ENCODE measurements at regions of chr19 and their contacts with region 1.

Region 1: GRCh38 chr19:56314562-56315077 is at the start of gene ZSCAN5A:
- DNase-seq: peak; percentile 92
- ATAC-seq: peak; percentile 79
- H3K4me3 ChIP-seq: peak within 1 kb of the TSS; percentile 89 to 92
- H3K27ac ChIP-seq: peak within 1 kb of the TSS; percentile 85
- H3K4me1 ChIP-seq: peaks cover 3 to 17% of the 10 kb centered on the region in 2 experiments; a peak in 3 of 4 replicates
- H3K27me3 ChIP-seq: no peaks in the 10 kb centered on the region
- CTCF ChIP-seq: no peak
- POLR2A ChIP-seq: no peak
- RAD21 ChIP-seq: no peak
- total RNA-seq, gene ZSCAN5A: 9.2 TPM

Region 2: DNA sequence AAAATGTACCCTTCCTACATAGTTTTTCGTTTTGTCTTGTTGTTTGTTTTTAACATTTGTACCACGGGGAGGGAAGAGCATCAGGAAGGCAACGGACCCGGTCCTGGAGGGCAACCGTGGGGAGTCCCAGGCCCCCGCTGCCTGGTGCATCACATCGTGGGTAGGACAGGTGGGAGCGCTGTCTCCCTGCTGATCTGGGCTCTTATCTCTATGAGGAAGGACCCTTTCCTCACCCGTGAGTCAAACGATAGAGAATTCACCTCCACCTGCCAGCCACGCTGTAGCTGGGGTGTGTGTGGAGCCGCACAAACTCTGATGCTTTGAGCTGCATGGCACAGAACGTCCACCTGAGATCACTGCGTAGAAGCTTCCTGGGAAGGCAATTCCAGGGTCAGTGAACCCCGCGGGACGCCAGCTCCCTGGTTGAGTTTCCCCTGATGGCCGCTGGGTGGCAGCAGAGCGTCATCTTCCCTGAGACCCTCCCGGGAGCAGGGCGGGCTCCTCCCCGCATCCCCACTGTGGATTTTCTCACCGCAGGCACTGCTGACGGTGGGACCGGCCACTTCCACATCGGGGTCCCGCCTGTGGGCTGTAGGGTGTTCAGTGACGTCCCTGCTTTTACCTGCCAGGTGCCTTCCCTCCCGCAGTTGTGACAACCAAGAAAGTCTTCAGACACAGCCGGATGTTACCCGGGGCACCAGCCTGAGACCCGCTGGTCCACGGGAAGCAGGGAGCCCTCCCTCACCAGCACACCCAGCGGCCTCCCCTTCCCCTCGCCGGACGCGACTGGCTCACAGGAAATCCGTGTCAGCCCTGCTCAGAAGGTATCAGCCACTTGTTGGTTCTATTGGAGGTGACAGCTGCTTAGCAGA is 248.2 kb before region 1 on chr19:
- CTCF ChIA-PET with region 1: interaction called, 18 read pairs
- POLR2A ChIA-PET with region 1: no interaction called
- RAD21 ChIA-PET with region 1: no interaction called
- intact Hi-C with region 1: no loop called
- DNase-seq: peak; percentile 44
- ATAC-seq: peak; percentile 96
- H3K4me3 ChIP-seq: peak overlapping the region; percentile 30 to 46
- H3K27ac ChIP-seq: no peak overlapping the region
- H3K4me1 ChIP-seq: peaks cover 6 to 10% of the 10 kb centered on the region in 2 experiments
- H3K27me3 ChIP-seq: peaks cover 11% of the 10 kb centered on the region; the same call in 1 of the 2 replicates
- CTCF ChIP-seq: peak; percentile 70 to 91 (median 88)
- POLR2A ChIP-seq: no peak
- RAD21 ChIP-seq: peak; percentile 74

Region 3: DNA sequence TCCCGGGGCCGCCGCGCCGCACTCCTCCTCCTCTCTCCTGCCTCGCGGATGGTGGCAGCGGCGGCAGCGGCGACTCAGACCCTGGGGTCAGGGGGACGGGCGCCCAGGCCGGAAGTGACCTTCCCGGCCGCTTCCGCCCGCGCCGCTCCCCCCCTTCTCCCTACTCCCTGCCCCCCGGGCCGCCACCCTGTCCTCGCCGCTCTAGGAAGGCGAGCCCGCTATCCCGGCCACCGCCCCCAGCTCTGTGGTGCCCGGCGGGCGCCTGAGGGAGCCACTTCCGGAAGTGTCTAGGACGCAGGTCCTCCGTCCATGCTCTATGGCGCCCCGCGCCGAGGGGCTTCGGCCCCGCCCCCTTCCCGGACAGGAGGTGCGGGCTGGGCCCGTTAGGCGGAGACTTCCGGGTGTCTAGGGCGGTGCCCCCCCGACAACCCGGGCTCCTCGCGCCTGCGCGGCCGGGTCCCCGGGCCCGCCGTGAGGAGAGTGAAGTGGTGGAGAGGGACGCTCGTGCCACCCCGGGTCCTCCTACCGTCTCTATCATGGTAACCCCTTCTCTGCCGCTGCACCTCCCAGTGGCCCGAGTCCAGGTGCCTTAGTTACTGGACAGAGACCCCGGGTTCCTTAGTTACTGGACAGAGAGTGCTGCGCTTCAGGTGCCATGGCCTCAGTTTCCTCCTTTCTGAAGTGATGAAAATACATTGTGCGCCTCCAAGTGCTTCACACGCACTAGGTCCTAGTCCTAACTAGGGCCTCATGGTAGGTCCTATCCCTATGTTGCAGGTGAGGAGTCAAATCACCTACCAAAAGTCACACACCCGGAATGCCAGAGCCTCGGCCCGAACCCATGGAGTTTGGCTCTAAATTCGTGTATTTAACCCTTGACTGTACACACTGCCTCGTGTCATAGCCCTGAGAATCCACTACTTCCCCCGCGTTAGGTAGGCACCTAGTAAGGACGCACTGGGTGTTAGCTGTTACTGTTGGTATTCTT is 193.1 kb before region 1 on chr19 and contains the start of gene ZNF787:
- CTCF ChIA-PET with region 1: interaction called, 3 read pairs
- POLR2A ChIA-PET with region 1: no interaction called
- RAD21 ChIA-PET with region 1: no interaction called
- intact Hi-C with region 1: loop called (anchors 2 kb)
- DNase-seq: peak; percentile 96
- ATAC-seq: peak; percentile 82
- H3K4me3 ChIP-seq: peak within 1 kb of the TSS; percentile 80 to 91
- H3K27ac ChIP-seq: peak within 1 kb of the TSS; percentile 96
- H3K4me1 ChIP-seq: peaks cover 9 to 22% of the 10 kb centered on the region in 2 experiments
- H3K27me3 ChIP-seq: no peaks in the 10 kb centered on the region
- CTCF ChIP-seq: no peak
- POLR2A ChIP-seq: no peak
- RAD21 ChIP-seq: no peak
- total RNA-seq, gene ZNF787: 40.3 TPM

Region 4: GRCh38 chr19:56140583-56141416 is 173.8 kb before region 1 on chr19 and contains the start of gene ZNF444:
- CTCF ChIA-PET with region 1: no interaction called
- POLR2A ChIA-PET with region 1: no interaction called
- RAD21 ChIA-PET with region 1: no interaction called
- intact Hi-C with region 1: loop called (anchors 1 kb)
- DNase-seq: peak; percentile 96
- ATAC-seq: peak; percentile 95
- H3K4me3 ChIP-seq: peak within 1 kb of the TSS; percentile 71 to 72
- H3K27ac ChIP-seq: peak within 1 kb of the TSS; percentile 52
- H3K4me1 ChIP-seq: peaks cover 6 to 12% of the 10 kb centered on the region in 2 experiments
- H3K27me3 ChIP-seq: no peaks in the 10 kb centered on the region
- CTCF ChIP-seq: no peak
- POLR2A ChIP-seq: no peak
- RAD21 ChIP-seq: no peak
- total RNA-seq, gene ZNF444: 31.7 TPM

Region 5: DNA sequence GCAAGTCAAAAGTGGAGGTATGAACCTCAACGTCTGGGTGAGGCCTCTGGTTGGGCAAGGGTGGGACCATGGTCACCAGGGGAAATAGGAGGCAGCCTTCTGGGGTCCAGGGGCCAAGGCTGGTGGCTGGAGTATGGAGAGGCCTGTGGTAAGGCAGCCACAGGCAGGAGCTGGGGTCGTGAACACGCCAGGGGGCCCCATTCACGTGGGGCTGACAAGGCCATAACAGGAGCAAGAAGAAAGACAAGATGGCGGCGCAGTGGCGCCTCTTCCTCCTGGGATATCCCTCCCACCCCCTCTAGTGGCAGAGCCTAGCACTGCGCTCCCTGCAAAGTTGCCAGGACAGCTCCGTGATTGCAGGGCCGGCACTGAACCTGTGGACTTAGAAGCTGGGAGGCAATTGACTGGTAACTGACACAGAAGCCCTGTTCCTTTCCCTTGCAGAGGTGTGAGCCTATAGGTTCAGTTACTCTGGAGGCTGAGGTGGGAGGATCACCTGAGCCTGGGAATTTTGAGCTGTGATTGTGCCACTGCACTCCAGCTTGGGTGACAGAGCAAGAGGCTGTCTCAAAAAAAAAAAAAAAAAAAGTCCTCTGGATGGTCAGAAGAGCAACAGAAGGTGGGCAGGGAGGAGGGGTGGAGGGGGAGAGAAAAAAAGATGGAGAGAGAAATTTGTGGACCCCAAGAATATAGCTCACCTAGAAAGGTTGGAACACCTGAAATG is 61.8 kb before region 1 on chr19:
- CTCF ChIA-PET with region 1: interaction called, 55 read pairs
- POLR2A ChIA-PET with region 1: interaction called, 4 read pairs
- RAD21 ChIA-PET with region 1: interaction called in 1 of 2 experiments, 8 read pairs
- intact Hi-C with region 1: loop called (anchors 5 kb)
- DNase-seq: peak; percentile 70
- ATAC-seq: peak; percentile 96
- H3K4me3 ChIP-seq: no peak overlapping the region
- H3K27ac ChIP-seq: no peak overlapping the region
- H3K4me1 ChIP-seq: peaks cover 0 to 3% of the 10 kb centered on the region in 2 experiments; a peak in 1 of 4 replicates
- H3K27me3 ChIP-seq: no peaks in the 10 kb centered on the region
- CTCF ChIP-seq: peak; percentile 67 to 99 (median 91); a peak in 5 of 6 replicates
- POLR2A ChIP-seq: no peak
- RAD21 ChIP-seq: peak; percentile 60

Region 6: DNA sequence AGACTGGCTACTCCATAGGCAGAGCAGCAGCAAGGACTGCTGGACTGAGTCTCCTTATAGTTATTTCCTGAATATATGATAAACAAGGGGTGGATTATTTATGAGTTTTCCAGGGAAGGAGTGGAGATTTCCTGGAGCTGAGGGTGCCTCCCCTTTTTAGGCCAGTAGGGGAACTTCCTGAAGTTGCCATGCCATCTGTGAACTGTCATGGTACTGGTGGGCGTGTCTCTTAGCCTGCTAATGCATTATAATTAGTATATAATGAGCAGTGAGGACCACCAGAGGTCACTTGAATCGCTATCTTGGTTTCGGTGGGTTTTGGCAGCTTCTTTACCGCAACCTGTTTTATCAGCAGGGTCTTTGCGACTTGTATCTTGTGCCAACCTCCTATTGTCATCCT is 13.4 kb before region 1 on chr19:
- CTCF ChIA-PET with region 1: interaction called, 36 read pairs
- POLR2A ChIA-PET with region 1: no interaction called
- RAD21 ChIA-PET with region 1: no interaction called
- intact Hi-C with region 1: no loop called
- DNase-seq: no peak
- ATAC-seq: peak; percentile 60; the same call in 1 of the 2 replicates
- H3K4me3 ChIP-seq: no peak overlapping the region
- H3K27ac ChIP-seq: no peak overlapping the region
- H3K4me1 ChIP-seq: no peaks in the 10 kb centered on the region
- H3K27me3 ChIP-seq: no peaks in the 10 kb centered on the region
- CTCF ChIP-seq: peak in 2 of 3 experiments; percentile 27 to 31; a peak in 3 of 6 replicates
- POLR2A ChIP-seq: no peak
- RAD21 ChIP-seq: no peak

Region 7: GRCh38 chr19:56333505-56333904 is 18.9 kb after region 1 on chr19:
- CTCF ChIA-PET with region 1: interaction called, 36 read pairs
- POLR2A ChIA-PET with region 1: no interaction called
- RAD21 ChIA-PET with region 1: no interaction called
- intact Hi-C with region 1: no loop called
- DNase-seq: peak; percentile 48
- ATAC-seq: peak; percentile 84
- H3K4me3 ChIP-seq: no peak overlapping the region
- H3K27ac ChIP-seq: no peak overlapping the region
- H3K4me1 ChIP-seq: no peaks in the 10 kb centered on the region
- H3K27me3 ChIP-seq: peaks cover 3% of the 10 kb centered on the region; the same call in 1 of the 2 replicates
- CTCF ChIP-seq: peak; percentile 68 to 71 (median 69); a peak in 5 of 6 replicates
- POLR2A ChIP-seq: no peak
- RAD21 ChIP-seq: peak; percentile 81

Region 8: GRCh38 chr19:56423276-56423984 is 108.8 kb after region 1 on chr19:
- CTCF ChIA-PET with region 1: no interaction called
- POLR2A ChIA-PET with region 1: no interaction called
- RAD21 ChIA-PET with region 1: no interaction called
- intact Hi-C with region 1: no loop called
- DNase-seq: no peak
- ATAC-seq: no peak
- H3K4me3 ChIP-seq: no peak overlapping the region
- H3K27ac ChIP-seq: no peak overlapping the region
- H3K4me1 ChIP-seq: no peaks in the 10 kb centered on the region
- H3K27me3 ChIP-seq: no peaks in the 10 kb centered on the region
- CTCF ChIP-seq: no peak
- POLR2A ChIP-seq: no peak
- RAD21 ChIP-seq: no peak

Measured in HCT116 (cell line).